ENCODE measurements at regions of chr15 and their contacts with region 1.

Region 1: DNA sequence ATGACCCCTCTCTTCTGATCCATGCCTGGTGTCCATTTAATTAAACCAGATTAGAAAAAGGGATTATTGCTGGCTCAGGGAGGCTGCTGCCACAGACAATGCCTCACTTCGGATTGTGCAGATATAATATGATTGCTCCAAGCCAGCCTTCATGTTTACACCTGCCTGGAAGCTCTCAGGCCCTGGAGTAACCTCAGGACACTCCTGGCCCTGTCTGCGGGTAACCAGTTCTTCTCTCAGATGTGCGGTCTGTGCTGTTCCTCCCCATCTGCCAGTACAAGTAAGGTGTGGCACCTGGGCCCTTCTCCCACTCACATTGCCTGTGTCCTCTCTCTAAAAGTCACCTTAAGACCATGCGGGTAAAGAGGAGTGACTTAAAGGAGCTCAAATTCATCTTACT is 8.8 kb upstream of the GOLGA8J start:
- DNase-seq: no peak
- H3K4me3 ChIP-seq: no peak overlapping the region
- H3K27ac ChIP-seq: no peak overlapping the region
- H3K4me1 ChIP-seq: peaks cover 0 to 1% (median 0%) of the 10 kb centered on the region in 4 experiments; a peak in 2 of 7 replicates
- H3K27me3 ChIP-seq: no peaks in the 10 kb centered on the region
- CTCF ChIP-seq: no peak
- EP300 ChIP-seq: no peak
- POLR2A ChIP-seq: no peak
- RAD21 ChIP-seq: no peak

Region 2: GRCh38 chr15:29756358-29757267 is 317.3 kb before region 1 on chr15:
- CTCF ChIA-PET with region 1: no interaction called
- POLR2A ChIA-PET with region 1: no interaction called
- DNase-seq: no peak
- H3K4me3 ChIP-seq: peak overlapping the region in 1 of 4 experiments; percentile 14; a peak in 1 of 8 replicates
- H3K27ac ChIP-seq: no peak overlapping the region
- H3K4me1 ChIP-seq: peaks cover 0 to 14% (median 0%) of the 10 kb centered on the region in 4 experiments; a peak in 3 of 7 replicates
- H3K27me3 ChIP-seq: no peaks in the 10 kb centered on the region
- CTCF ChIP-seq: no peak
- EP300 ChIP-seq: no peak
- POLR2A ChIP-seq: no peak
- RAD21 ChIP-seq: no peak

Region 3: GRCh38 chr15:29835301-29835700 is 238.6 kb before region 1 on chr15:
- CTCF ChIA-PET with region 1: no interaction called
- POLR2A ChIA-PET with region 1: no interaction called
- DNase-seq: no peak
- H3K4me3 ChIP-seq: no peak overlapping the region
- H3K27ac ChIP-seq: no peak overlapping the region
- H3K4me1 ChIP-seq: no peaks in the 10 kb centered on the region
- H3K27me3 ChIP-seq: no peaks in the 10 kb centered on the region
- CTCF ChIP-seq: no peak
- EP300 ChIP-seq: no peak
- POLR2A ChIP-seq: no peak
- RAD21 ChIP-seq: no peak

Region 4: GRCh38 chr15:29942143-29942542 is 131.8 kb before region 1 on chr15:
- CTCF ChIA-PET with region 1: interaction called, 24 read pairs
- POLR2A ChIA-PET with region 1: no interaction called
- DNase-seq: no peak
- H3K4me3 ChIP-seq: no peak overlapping the region
- H3K27ac ChIP-seq: no peak overlapping the region
- H3K4me1 ChIP-seq: no peaks in the 10 kb centered on the region
- H3K27me3 ChIP-seq: no peaks in the 10 kb centered on the region
- CTCF ChIP-seq: peak in 2 of 3 experiments; percentile 53 to 56; a peak in 3 of 4 replicates
- EP300 ChIP-seq: no peak
- POLR2A ChIP-seq: no peak
- RAD21 ChIP-seq: peak; percentile 64 to 72

Region 5: GRCh38 chr15:29972051-29972450 is 101.9 kb before region 1 on chr15:
- CTCF ChIA-PET with region 1: no interaction called
- POLR2A ChIA-PET with region 1: no interaction called
- DNase-seq: no peak
- H3K4me3 ChIP-seq: no peak overlapping the region
- H3K27ac ChIP-seq: no peak overlapping the region
- H3K4me1 ChIP-seq: peaks cover 0 to 6% (median under 1%) of the 10 kb centered on the region in 4 experiments; a peak in 2 of 7 replicates
- H3K27me3 ChIP-seq: peaks cover 16 to 30% (median 25%) of the 10 kb centered on the region in 4 experiments
- CTCF ChIP-seq: no peak
- EP300 ChIP-seq: no peak
- POLR2A ChIP-seq: no peak
- RAD21 ChIP-seq: no peak

Region 6: DNA sequence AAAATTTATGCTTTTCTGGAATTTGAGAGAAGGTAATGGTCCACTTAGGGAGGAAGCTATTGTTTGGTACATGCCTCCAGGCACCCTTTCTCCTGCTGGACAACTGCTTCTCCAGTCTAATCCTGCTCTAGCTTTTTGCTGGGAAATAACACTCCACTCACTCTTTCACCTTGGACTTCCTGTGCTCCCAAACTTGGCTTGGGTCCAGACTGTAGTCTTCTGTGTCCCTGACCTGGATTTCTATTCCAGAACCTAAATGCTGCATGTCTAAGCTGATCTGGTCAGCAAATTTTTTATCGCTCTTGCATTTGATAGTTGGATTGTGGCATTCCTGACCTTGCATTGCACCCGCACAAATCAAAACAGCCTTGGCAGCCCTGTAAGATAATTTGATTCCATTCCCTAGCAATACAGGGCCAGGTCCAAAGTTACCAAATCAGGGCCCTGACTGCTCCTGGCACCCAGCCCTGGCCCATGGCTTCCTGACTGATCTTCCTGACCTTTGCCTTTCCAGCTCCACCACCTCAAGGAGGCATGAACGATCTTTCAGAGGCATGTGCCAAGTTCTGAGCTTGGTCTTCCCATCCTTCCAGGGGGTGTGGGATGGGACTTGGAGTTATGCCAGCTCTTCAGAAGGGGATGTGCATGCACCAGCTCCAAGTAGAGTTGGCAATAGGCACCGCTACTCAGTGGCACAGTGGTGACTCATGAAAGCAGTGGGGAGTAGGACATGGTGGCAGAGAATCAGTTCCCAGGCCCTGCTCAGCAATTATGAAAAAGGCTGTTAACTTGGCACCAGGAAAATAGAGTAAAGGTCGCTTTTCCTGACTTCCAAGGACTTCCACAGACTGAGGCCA is 35.0 kb before region 1 on chr15:
- CTCF ChIA-PET with region 1: no interaction called
- POLR2A ChIA-PET with region 1: no interaction called
- DNase-seq: no peak
- H3K4me3 ChIP-seq: no peak overlapping the region
- H3K27ac ChIP-seq: no peak overlapping the region
- H3K4me1 ChIP-seq: no peaks in the 10 kb centered on the region
- H3K27me3 ChIP-seq: no peaks in the 10 kb centered on the region
- CTCF ChIP-seq: no peak
- EP300 ChIP-seq: no peak
- POLR2A ChIP-seq: no peak
- RAD21 ChIP-seq: no peak

Region 7: DNA sequence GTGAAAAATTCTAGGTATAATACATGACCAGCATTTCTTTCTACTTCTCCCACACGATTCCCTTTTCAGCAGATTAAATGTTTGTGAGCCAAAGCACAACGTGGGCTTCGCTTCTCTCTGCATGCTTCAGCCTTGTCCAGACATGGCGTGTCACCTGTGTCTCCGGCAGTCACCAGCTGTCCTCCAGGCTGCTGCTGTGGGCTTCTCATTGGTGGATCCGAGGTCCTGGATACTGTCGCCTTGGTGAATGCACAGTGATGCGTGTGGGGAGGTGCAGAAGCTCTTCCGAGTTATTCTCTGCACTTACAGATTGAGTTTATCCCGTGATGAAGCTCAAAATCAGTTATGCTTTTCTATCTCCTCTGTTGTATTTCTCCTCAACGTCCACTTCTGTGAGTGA is 14.1 kb before region 1 on chr15:
- CTCF ChIA-PET with region 1: interaction called, 10 read pairs
- POLR2A ChIA-PET with region 1: no interaction called
- DNase-seq: no peak
- H3K4me3 ChIP-seq: no peak overlapping the region
- H3K27ac ChIP-seq: no peak overlapping the region
- H3K4me1 ChIP-seq: no peaks in the 10 kb centered on the region
- H3K27me3 ChIP-seq: no peaks in the 10 kb centered on the region
- CTCF ChIP-seq: no peak
- EP300 ChIP-seq: no peak
- POLR2A ChIP-seq: no peak
- RAD21 ChIP-seq: no peak

Measured in H1 (cell line).